ENCODE measurements at regions of chr5 and their contacts with region 1.

Region 1: GRCh38 chr5:98773464-98774191 is at the start of gene RGMB:
- DNase-seq: peak; percentile 99 to 100
- ATAC-seq: peak; percentile 74 to 77
- H3K4me3 ChIP-seq: peak within 1 kb of the TSS; percentile 84 to 88 (median 86)
- H3K27ac ChIP-seq: peak within 1 kb of the TSS; percentile 94 to 98 (median 96)
- H3K4me1 ChIP-seq: peaks cover 44 to 45% of the 10 kb centered on the region in 2 donors
- H3K27me3 ChIP-seq: no peaks in the 10 kb centered on the region
- CTCF ChIP-seq: peak in 1 of 5 experiments; percentile 11
- POLR2A ChIP-seq: peak; percentile 93 to 98
- total RNA-seq, gene RGMB: 11.2 to 57.8 (median 25.9) TPM

Region 2: DNA sequence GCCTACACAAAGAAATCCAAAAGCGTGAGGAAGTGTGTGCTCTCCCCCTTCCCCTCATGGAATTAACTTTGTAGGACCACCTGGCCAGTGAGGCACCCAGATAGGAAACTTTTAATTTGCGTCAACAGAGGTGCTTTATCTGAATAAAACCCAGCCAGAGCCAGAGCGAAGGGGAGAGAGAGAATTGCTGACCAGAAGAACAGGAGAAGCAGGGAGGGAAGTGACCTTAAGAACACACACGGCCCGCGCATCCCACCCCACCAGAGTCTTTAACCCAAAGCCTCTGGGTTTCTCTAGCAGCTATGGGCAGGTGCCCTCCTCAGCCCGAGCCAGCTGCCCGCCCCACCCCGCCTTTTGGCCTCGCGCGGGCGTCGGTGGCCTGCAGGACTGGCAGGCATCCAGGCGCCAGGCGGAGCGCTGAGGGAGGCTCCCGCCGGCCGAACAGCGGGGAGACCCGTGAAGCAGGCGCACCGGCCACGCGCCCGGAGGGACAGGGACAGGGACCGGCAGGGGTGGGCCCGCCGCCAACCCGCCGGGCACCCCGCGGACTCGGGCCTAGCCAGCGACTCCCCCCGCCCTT is 1966.5 kb before region 1 on chr5:
- in situ Hi-C with region 1: no loop called
- intact Hi-C with region 1: loop called (anchors 10 kb)
- DNase-seq: peak; percentile 78 to 88
- ATAC-seq: peak; percentile 60 to 64
- H3K4me3 ChIP-seq: peak overlapping the region; percentile 95 to 98 (median 97)
- H3K27ac ChIP-seq: peak overlapping the region; percentile 99 to 100 (median 100)
- H3K4me1 ChIP-seq: peaks cover 11 to 22% of the 10 kb centered on the region in 2 donors
- H3K27me3 ChIP-seq: no peaks in the 10 kb centered on the region
- CTCF ChIP-seq: no peak
- POLR2A ChIP-seq: peak; percentile 71 to 73

Region 3: DNA sequence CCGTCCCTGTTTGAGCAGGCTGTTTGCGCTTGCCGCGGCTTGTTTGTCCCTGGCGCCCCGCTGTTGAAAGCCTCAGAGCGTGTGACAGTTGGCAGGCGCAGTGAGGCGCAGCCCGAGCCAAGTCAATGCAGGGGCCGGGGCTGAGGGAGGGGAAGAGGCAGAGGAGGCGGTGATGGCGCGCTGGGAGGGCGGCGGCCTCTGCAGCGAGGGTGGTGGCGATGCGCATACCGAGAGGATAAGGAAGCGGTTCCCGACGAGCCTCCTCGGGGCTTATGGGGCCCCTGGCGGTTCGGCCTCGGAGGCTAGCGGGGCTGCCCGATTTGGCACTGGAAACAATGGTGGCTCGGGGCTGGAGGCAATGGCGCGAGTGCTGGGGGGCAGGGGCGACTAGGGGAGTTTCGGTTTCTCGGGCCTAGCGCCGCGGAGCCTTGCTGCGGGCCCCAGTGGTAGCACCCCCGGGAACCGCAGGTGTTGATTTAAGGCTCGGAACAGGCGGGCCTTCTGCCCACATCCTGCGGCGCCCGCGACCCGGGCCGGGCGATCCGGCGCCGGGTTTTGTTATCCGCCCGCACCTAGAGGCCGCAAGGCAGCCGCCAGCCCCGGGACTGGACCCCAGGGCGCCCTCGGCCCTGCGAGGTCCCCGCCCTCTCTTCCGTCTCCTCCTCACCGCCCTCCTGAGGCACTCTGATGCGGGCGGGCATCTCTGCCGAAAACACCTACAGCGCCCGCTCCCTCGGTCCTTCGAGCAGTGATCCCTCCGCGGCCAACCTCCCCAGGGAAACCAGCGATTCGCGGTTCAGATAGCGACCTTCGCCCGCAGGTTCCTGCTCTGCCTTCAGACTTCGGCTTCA is 1838.7 kb before region 1 on chr5:
- in situ Hi-C with region 1: no loop called
- intact Hi-C with region 1: loop called (anchors 2 kb)
- DNase-seq: peak; percentile 85 to 93
- ATAC-seq: peak; percentile 65 to 67
- H3K4me3 ChIP-seq: peak overlapping the region; percentile 71 to 91 (median 89)
- H3K27ac ChIP-seq: peak overlapping the region; percentile 96 to 100 (median 98)
- H3K4me1 ChIP-seq: peaks cover 46 to 53% of the 10 kb centered on the region in 2 donors
- H3K27me3 ChIP-seq: no peaks in the 10 kb centered on the region
- CTCF ChIP-seq: peak in 4 of 5 experiments; percentile 3 to 41 (median 35)
- POLR2A ChIP-seq: peak; percentile 58 to 69

Region 4: GRCh38 chr5:97062046-97062445 is 1711.6 kb before region 1 on chr5:
- in situ Hi-C with region 1: no loop called
- intact Hi-C with region 1: no loop called
- DNase-seq: peak; percentile 4 to 20
- ATAC-seq: peak; percentile 36 to 72
- H3K4me3 ChIP-seq: no peak overlapping the region
- H3K27ac ChIP-seq: no peak overlapping the region
- H3K4me1 ChIP-seq: no peaks in the 10 kb centered on the region
- H3K27me3 ChIP-seq: no peaks in the 10 kb centered on the region
- CTCF ChIP-seq: no peak
- POLR2A ChIP-seq: no peak

Region 5: DNA sequence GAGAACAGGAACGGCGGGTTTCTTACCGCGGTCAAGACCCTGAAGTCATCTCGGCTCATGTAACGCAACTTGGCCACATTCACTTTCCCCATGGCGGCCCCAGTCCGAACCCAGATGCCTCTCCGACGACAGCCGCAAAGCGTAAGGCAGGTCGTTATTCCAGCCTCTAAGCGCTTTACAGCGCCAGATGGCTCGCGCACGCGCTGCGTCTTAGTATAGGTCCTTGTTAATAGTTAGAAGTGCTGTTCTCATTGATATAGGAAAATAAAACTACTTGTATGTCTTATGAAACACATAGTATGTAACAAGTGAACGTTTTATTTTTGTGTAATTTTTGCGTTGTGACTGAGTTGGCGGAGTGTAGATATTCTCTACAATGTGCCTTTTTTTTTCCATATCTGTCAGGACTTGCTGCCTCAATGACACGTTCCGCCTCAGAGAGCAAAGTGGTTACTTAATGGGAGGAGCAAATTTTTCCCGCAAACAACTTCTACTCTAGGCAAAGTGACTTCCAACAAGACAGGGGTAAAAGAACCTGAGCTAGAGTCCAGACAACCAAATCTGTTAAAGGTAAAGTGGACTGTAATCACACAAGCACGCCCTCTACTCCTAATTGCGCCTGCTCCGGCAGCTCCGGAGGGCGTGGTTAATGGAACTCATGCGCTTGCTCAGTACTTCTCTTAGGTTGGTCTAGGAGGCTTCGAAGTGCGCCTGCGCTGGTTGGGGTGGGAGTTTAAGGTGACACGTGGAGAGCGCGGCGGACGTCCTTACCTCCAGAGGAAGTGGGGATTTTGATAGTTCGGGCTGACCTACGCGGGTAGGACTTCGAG is 1590.3 kb before region 1 on chr5 and contains the start of gene RIOK2:
- in situ Hi-C with region 1: loop called in 1 of 4 experiments (anchors 25 kb)
- intact Hi-C with region 1: loop called (anchors 2 kb)
- DNase-seq: peak; percentile 86 to 92
- ATAC-seq: peak; percentile 95 to 96
- H3K4me3 ChIP-seq: peak within 1 kb of the TSS; percentile 65 to 96 (median 82)
- H3K27ac ChIP-seq: peak within 1 kb of the TSS; percentile 84 to 92 (median 88)
- H3K4me1 ChIP-seq: peaks cover 11 to 21% of the 10 kb centered on the region in 2 donors
- H3K27me3 ChIP-seq: no peaks in the 10 kb centered on the region
- CTCF ChIP-seq: no peak
- POLR2A ChIP-seq: peak; percentile 56 to 62
- total RNA-seq, gene RIOK2: 9.8 to 34.4 (median 17.3) TPM

Region 6: GRCh38 chr5:97854871-97855762 is 918.5 kb before region 1 on chr5:
- in situ Hi-C with region 1: no loop called
- intact Hi-C with region 1: no loop called
- DNase-seq: no peak
- ATAC-seq: no peak
- H3K4me3 ChIP-seq: no peak overlapping the region
- H3K27ac ChIP-seq: no peak overlapping the region
- H3K4me1 ChIP-seq: no peaks in the 10 kb centered on the region
- H3K27me3 ChIP-seq: no peaks in the 10 kb centered on the region
- CTCF ChIP-seq: no peak
- POLR2A ChIP-seq: no peak

Region 7: DNA sequence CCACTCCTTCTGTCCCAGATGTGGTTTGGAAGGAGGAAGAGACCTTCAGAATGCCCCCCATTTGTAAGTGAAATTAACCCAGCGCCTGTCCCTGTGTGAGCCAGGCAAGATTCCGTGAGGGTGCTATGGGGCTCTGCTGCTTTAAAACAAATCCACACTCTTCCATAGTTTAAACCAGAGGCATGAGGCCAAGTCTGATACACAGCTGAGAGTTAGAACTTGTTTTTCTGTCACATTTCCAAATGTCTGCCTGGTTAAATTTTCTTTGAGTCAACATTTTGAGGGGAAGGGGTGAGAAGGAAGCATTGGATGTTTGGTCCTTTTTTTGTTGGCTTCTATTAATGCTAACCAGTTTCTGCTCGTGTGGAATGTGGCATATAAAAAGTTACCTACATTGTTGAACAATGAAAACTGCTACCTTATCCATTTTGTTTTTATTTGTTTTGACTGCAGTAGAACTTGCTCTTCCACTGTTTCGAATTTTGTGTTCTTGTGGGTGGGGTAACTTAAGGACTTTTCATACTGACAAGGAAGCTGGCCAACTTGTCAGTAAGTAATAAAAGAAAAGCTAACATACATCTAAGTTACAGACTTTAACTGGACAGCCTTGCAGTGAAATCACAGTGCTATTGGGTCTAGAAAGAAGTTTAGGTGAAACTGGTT is 12.7 kb after region 1 on chr5:
- in situ Hi-C with region 1: no loop called
- intact Hi-C with region 1: loop called (anchors 2 kb)
- DNase-seq: no peak
- ATAC-seq: no peak
- H3K4me3 ChIP-seq: no peak overlapping the region
- H3K27ac ChIP-seq: peak overlapping the region; percentile 67 to 75 (median 72)
- H3K4me1 ChIP-seq: peaks cover 79 to 88% of the 10 kb centered on the region in 2 donors
- H3K27me3 ChIP-seq: no peaks in the 10 kb centered on the region
- CTCF ChIP-seq: no peak
- POLR2A ChIP-seq: no peak

Region 8: DNA sequence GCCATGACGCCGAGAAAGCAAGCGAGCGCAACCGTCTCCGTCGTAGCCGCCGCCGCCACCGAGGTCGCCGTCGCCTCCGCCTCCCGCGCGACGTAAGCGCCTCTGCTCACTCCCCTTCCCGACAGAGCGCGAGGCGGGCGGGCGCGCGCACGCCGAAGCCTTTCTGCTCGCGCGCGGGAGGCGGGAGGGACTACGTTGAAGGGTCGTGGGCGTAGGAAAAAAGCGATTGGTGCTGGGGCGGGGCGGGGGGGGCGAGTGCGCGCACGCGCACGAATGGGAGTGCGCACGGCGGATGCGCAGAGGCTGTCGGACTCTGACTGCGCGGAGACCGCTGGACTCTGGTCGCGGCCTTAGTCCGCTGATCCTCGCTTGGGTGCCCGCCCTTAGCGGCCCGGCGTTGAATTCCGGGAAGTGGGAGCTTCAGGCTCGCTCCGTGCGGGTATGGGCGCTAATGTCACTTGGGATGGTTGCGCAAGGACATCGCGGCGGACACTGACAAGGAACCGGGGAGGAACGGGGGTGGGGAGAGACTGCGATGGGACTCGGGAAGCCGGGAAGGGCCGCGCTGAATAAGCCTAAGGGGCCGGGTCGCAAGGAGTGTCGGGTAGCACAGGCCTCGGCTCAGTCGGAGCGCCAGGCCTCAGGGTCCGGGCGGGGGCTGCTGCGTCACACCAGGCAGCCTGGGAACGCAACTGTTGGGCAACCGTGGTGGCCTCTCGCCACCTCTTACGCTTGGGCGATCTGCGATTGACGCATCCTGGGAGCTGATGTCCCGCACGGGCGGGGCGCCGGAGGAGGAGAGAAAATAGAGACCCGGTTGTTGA is 155.5 kb after region 1 on chr5 and contains the start of gene CHD1:
- in situ Hi-C with region 1: loop called in 1 of 4 experiments (anchors 10 kb)
- intact Hi-C with region 1: loop called (anchors 1 kb)
- DNase-seq: peak; percentile 98 to 99
- ATAC-seq: peak; percentile 83 to 85
- H3K4me3 ChIP-seq: peak within 1 kb of the TSS; percentile 77 to 93 (median 84)
- H3K27ac ChIP-seq: peak within 1 kb of the TSS; percentile 99 to 100 (median 99)
- H3K4me1 ChIP-seq: peaks cover 53 to 57% of the 10 kb centered on the region in 2 donors
- H3K27me3 ChIP-seq: no peaks in the 10 kb centered on the region
- CTCF ChIP-seq: peak in 1 of 5 experiments; percentile 7
- POLR2A ChIP-seq: peak; percentile 97 to 98
- total RNA-seq, gene CHD1: 25.0 to 44.3 (median 33.8) TPM

Region 9: GRCh38 chr5:99032234-99033013 is 258.8 kb after region 1 on chr5:
- in situ Hi-C with region 1: loop called in 1 of 4 experiments (anchors 10 kb)
- intact Hi-C with region 1: no loop called
- DNase-seq: peak; percentile 27 to 36
- ATAC-seq: peak; percentile 83 to 89
- H3K4me3 ChIP-seq: peak overlapping the region in 2 of 4 donors; percentile 12 to 39
- H3K27ac ChIP-seq: peak overlapping the region; percentile 17 to 52 (median 39)
- H3K4me1 ChIP-seq: peaks cover 0 to 4% of the 10 kb centered on the region in 2 donors
- H3K27me3 ChIP-seq: no peaks in the 10 kb centered on the region
- CTCF ChIP-seq: peak; percentile 51 to 74 (median 67)
- POLR2A ChIP-seq: no peak